ENCODE measurements at regions of chr1 and their contacts with region 1.

Region 1: GRCh38 chr1:61588736-61589672 is 135.9 kb downstream of the TM2D1 start:
- DNase-seq: no peak
- ATAC-seq: peak; percentile 37
- H3K4me3 Mint-ChIP-seq: no peak overlapping the region
- H3K27ac Mint-ChIP-seq: no peak overlapping the region
- H3K4me1 Mint-ChIP-seq: no peaks in the 10 kb centered on the region
- H3K27me3 Mint-ChIP-seq: peaks cover 2% of the 10 kb centered on the region
- CTCF ChIP-seq: peak; percentile 71

Region 2: GRCh38 chr1:59971464-59971911 is 1617.5 kb before region 1 on chr1:
- CTCF ChIA-PET with region 1: no interaction called
- POLR2A ChIA-PET with region 1: no interaction called
- intact Hi-C with region 1: loop called (anchors 1 kb)
- DNase-seq: no peak
- ATAC-seq: no peak
- H3K4me3 Mint-ChIP-seq: no peak overlapping the region
- H3K27ac Mint-ChIP-seq: no peak overlapping the region
- H3K4me1 Mint-ChIP-seq: peaks cover 2% of the 10 kb centered on the region
- H3K27me3 Mint-ChIP-seq: peaks cover 17% of the 10 kb centered on the region
- CTCF ChIP-seq: no peak

Region 3: GRCh38 chr1:60978421-60979357 is 610.3 kb before region 1 on chr1:
- CTCF ChIA-PET with region 1: interaction called, 5 read pairs
- POLR2A ChIA-PET with region 1: no interaction called
- intact Hi-C with region 1: loop called (anchors 5 kb)
- DNase-seq: no peak
- ATAC-seq: no peak
- H3K4me3 Mint-ChIP-seq: no peak overlapping the region
- H3K27ac Mint-ChIP-seq: no peak overlapping the region
- H3K4me1 Mint-ChIP-seq: peaks cover 7% of the 10 kb centered on the region
- H3K27me3 Mint-ChIP-seq: peaks cover 1% of the 10 kb centered on the region
- CTCF ChIP-seq: no peak

Region 4: GRCh38 chr1:61049850-61050540 is 539.0 kb before region 1 on chr1:
- CTCF ChIA-PET with region 1: interaction called, 14 read pairs
- POLR2A ChIA-PET with region 1: no interaction called
- intact Hi-C with region 1: no loop called
- DNase-seq: peak; percentile 82
- ATAC-seq: peak; percentile 87
- H3K4me3 Mint-ChIP-seq: peak overlapping the region; percentile 82
- H3K27ac Mint-ChIP-seq: no peak overlapping the region
- H3K4me1 Mint-ChIP-seq: peaks cover 29% of the 10 kb centered on the region
- H3K27me3 Mint-ChIP-seq: peaks cover 54% of the 10 kb centered on the region
- CTCF ChIP-seq: peak; percentile 36

Region 5: DNA sequence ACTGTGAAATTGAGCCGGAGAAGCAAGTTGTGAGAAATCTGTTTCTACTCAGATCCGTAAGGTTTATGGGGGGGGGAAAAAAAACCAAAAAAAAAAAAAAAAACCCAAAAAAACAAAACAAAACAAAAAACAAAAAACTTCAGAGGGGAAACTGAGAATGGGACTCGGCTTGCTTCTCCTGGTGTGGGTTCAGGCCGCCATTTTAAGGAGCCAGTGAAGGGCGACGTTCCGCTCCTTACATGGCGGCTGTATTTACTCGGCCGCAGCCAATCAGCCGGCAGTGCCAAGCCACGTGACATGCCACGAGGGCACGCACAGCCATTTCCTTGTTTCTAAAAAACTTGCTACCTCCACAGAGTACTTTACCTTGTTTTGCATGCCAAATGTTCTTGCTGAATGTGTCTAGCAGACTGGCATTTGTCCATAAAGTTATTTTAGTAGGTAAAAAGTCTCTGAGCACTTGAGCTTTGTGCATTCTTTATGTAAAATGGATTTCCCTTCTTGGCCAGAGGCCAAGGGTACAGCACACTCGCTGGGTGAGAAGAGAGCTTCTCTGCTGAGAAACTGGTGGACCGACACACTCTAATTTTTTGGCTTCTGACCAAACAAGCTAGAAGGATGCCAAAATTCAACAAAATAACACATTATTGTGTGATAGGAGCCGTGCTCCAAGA is 404.8 kb before region 1 on chr1:
- CTCF ChIA-PET with region 1: no interaction called
- POLR2A ChIA-PET with region 1: no interaction called
- intact Hi-C with region 1: no loop called
- DNase-seq: no peak
- ATAC-seq: no peak
- H3K4me3 Mint-ChIP-seq: no peak overlapping the region
- H3K27ac Mint-ChIP-seq: no peak overlapping the region
- H3K4me1 Mint-ChIP-seq: no peaks in the 10 kb centered on the region
- H3K27me3 Mint-ChIP-seq: no peaks in the 10 kb centered on the region
- CTCF ChIP-seq: no peak

Region 6: GRCh38 chr1:61569303-61569621 is 19.7 kb before region 1 on chr1:
- CTCF ChIA-PET with region 1: no interaction called
- POLR2A ChIA-PET with region 1: no interaction called
- intact Hi-C with region 1: no loop called
- DNase-seq: no peak
- ATAC-seq: no peak
- H3K4me3 Mint-ChIP-seq: no peak overlapping the region
- H3K27ac Mint-ChIP-seq: no peak overlapping the region
- H3K4me1 Mint-ChIP-seq: no peaks in the 10 kb centered on the region
- H3K27me3 Mint-ChIP-seq: no peaks in the 10 kb centered on the region
- CTCF ChIP-seq: no peak